ENCODE measurements at regions of chr6 and their contacts with region 1.

Region 1: GRCh38 chr6:104771258-104771832 is 88.4 kb downstream of the HACE1 start:
- DNase-seq: no peak
- ATAC-seq: peak; percentile 73
- H3K4me3 Mint-ChIP-seq: no peak overlapping the region
- H3K27ac Mint-ChIP-seq: no peak overlapping the region
- H3K4me1 Mint-ChIP-seq: peaks cover 6% of the 10 kb centered on the region
- H3K27me3 Mint-ChIP-seq: no peaks in the 10 kb centered on the region

Region 2: DNA sequence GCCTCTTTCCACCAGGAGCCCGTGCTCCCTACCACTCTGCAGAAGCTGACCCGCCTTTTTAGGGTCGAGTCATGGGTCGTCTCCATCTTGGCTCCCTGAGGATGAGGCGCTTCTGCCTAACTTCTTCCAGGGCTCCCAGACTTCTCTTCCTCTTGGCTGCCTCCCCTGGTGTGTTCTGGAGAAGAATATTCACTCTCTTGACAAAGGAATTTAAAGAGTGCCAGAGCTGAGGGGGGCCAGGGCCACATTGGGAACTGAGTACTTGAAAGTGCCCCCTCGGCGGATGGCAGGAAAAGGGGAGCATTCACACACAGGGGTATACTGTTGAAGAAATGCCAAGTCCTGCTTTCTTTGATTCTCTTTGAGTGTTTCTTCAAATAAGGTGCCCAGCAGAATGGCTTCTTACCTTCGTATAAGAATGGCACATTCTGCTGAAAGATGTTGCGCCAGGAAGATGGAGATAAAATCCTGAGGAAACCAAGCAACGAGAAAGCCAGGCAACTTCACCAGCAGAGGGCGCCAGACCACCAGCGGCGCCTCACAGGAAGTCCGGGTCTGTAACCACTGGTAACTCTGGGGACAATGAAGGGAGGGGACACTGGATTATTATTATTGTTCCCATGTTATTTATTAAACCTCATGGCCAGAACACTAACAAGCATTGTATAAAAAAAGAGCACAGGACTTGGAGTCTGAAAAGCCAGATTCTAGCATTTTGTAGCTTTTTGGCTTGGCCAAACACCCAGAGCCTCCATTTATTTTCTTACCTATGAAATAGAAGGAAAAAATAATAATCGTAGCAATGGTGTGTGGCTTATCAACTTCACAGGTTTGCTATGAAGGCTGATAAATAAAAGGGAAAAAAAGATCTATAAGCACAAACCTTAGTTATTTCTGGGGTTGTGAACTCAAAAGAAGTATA is 88.4 kb before region 1 on chr6:
- CTCF ChIA-PET with region 1: interaction called, 63 read pairs
- POLR2A ChIA-PET with region 1: no interaction called
- DNase-seq: peak; percentile 79
- ATAC-seq: peak; percentile 72
- H3K4me3 Mint-ChIP-seq: no peak overlapping the region
- H3K27ac Mint-ChIP-seq: no peak overlapping the region
- H3K4me1 Mint-ChIP-seq: peaks cover 15% of the 10 kb centered on the region
- H3K27me3 Mint-ChIP-seq: no peaks in the 10 kb centered on the region

Region 3: DNA sequence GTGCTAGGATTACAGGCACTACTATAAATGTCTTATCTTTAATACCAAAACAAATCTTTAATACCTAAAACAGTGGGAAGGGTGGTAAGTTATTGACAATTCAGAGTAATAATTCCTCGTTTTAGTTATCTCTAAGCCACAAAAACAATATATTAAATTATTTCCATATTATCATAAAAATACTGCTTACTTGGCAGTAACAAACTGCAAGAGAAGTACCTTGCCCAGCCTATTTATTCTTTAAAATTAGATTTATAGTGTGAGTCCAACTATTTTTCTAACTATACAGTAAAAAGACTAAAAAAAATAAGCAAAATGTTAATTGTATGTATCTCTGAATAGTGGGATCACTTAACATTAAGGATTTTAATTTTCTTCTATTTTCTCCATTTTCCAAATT is 34.8 kb before region 1 on chr6:
- CTCF ChIA-PET with region 1: no interaction called
- POLR2A ChIA-PET with region 1: no interaction called
- DNase-seq: no peak
- ATAC-seq: no peak
- H3K4me3 Mint-ChIP-seq: no peak overlapping the region
- H3K27ac Mint-ChIP-seq: no peak overlapping the region
- H3K4me1 Mint-ChIP-seq: no peaks in the 10 kb centered on the region
- H3K27me3 Mint-ChIP-seq: no peaks in the 10 kb centered on the region

Region 4: GRCh38 chr6:104829183-104829958 is 58.0 kb after region 1 on chr6:
- CTCF ChIA-PET with region 1: no interaction called
- POLR2A ChIA-PET with region 1: no interaction called
- DNase-seq: no peak
- ATAC-seq: no peak
- H3K4me3 Mint-ChIP-seq: no peak overlapping the region
- H3K27ac Mint-ChIP-seq: no peak overlapping the region
- H3K4me1 Mint-ChIP-seq: peaks cover 6% of the 10 kb centered on the region
- H3K27me3 Mint-ChIP-seq: no peaks in the 10 kb centered on the region

Measured in activated CD8-positive, alpha-beta T cell treated with anti-CD3 and anti-CD28 coated beads, Interleukin-2, amount 10 ng/mL, durations not matched to agents 7 days and 5 days (primary cell).